ENCODE measurements at regions of chr4 and their contacts with region 1.

Region 1: GRCh38 chr4:7843831-7844593 is 95.6 kb downstream of the AFAP1 start:
- DNase-seq: peak; percentile 73
- H3K4me3 ChIP-seq: no peak overlapping the region; a peak in 1 of 4 replicates
- H3K27ac ChIP-seq: peak overlapping the region; percentile 86 to 100
- H3K4me1 ChIP-seq: peaks cover 26 to 54% of the 10 kb centered on the region in 2 experiments
- H3K27me3 ChIP-seq: no peaks in the 10 kb centered on the region
- CTCF ChIP-seq: peak; percentile 68
- EP300 ChIP-seq: no peak
- RAD21 ChIP-seq: peak; percentile 62

Region 2: DNA sequence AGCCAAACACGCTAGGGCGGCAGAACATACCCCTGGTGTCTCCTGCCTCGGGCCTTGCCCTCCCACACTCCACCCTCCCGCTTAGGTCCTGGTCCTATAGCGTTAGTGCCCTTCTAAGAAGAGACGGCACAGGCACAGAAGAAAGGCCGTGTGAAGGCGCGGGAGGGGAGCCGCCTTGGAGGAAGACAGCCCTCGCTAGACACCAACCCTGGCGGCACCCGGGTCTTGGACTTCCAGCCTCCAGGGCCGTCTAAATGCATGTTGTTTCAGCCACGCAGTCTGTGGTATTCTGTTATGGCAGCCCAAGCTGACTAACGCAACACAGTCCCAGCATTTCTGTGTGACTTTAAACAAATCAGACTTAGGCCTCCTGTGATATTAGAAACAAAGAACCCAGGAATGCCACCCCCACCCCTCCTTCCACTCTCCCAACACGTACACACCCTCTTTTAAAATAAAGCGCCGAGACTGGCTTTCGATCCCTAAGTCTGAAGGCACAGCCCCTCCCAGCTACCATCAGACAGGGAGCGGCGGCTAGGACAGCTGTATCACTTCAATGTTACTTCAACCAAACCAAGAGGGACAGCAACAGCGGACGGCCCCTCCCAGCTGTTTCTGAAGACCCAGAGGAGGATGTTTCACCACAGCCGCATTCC is 32.3 kb before region 1 on chr4:
- CTCF ChIA-PET with region 1: interaction called, 73 read pairs
- POLR2A ChIA-PET with region 1: no interaction called
- DNase-seq: no peak
- H3K4me3 ChIP-seq: no peak overlapping the region
- H3K27ac ChIP-seq: peak overlapping the region in 1 of 2 experiments; percentile 55; a peak in 1 of 4 replicates
- H3K4me1 ChIP-seq: peaks cover 5 to 54% of the 10 kb centered on the region in 2 experiments; a peak in 3 of 4 replicates
- H3K27me3 ChIP-seq: no peaks in the 10 kb centered on the region
- CTCF ChIP-seq: no peak
- EP300 ChIP-seq: no peak
- RAD21 ChIP-seq: no peak

Region 3: DNA sequence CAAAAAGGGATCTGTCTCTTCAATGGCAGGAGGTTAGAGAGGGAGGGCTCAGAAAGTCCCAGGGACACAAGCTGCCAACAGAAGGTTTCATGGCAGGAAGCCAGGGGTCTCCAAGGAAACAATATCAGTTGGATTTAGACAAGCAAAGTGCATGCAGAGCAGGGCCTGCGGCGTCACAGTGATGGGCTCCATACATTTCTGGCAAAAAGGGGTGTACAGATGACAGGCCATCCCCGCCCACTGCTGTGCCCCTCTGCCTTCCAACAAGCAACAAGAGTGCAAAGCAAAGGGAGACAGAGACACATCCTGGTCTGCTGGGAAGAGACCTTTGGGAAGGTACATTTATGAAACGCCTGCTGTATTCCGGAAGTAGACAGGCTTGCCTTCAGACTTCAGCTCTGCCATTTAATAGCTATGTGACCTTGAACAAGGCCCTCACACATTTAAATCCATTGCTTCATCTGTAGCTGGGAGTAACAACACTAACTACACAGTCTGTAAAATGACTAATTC is 25.6 kb before region 1 on chr4:
- CTCF ChIA-PET with region 1: interaction called, 11 read pairs
- POLR2A ChIA-PET with region 1: no interaction called
- DNase-seq: peak; percentile 79
- H3K4me3 ChIP-seq: no peak overlapping the region
- H3K27ac ChIP-seq: peak overlapping the region; percentile 97 to 99
- H3K4me1 ChIP-seq: peaks cover 29 to 76% of the 10 kb centered on the region in 2 experiments
- H3K27me3 ChIP-seq: no peaks in the 10 kb centered on the region
- CTCF ChIP-seq: no peak
- EP300 ChIP-seq: peak in 1 of 2 experiments; percentile 92; a peak in 2 of 4 replicates
- RAD21 ChIP-seq: peak; percentile 36

Measured in SK-N-SH (cell line).